Right ventricle myocardium superior (tissue), 1 donor: ENCODE measurements at regions of chr5 and their contacts with region 1.

Region 1: GRCh38 chr5:114097570-114097969 is 264.3 kb upstream of the KCNN2 start:
- DNase-seq: no peak
- ATAC-seq: no peak

Region 2: GRCh38 chr5:113875096-113875495 is 222.5 kb before region 1 on chr5:
- intact Hi-C with region 1: no loop called
- DNase-seq: no peak
- ATAC-seq: no peak

Region 3: GRCh38 chr5:114305402-114306211 is 208.0 kb after region 1 on chr5:
- intact Hi-C with region 1: loop called (anchors 10 kb)
- DNase-seq: no peak
- ATAC-seq: peak; percentile 49